HCT116 (cell line): ENCODE measurements at regions of chr10 and their contacts with region 1.

Region 1: GRCh38 chr10:22988581-22989360 is 60.9 kb downstream of the ARMC3 start:
- DNase-seq: peak; percentile 57
- ATAC-seq: peak; percentile 72
- H3K4me3 ChIP-seq: peak overlapping the region in 1 of 2 experiments; percentile 23; a peak in 2 of 4 replicates
- H3K27ac ChIP-seq: no peak overlapping the region
- H3K4me1 ChIP-seq: peaks cover 0 to 16% of the 10 kb centered on the region in 2 experiments; a peak in 1 of 4 replicates
- H3K27me3 ChIP-seq: no peaks in the 10 kb centered on the region
- CTCF ChIP-seq: peak; percentile 78 to 93 (median 82)
- POLR2A ChIP-seq: no peak
- RAD21 ChIP-seq: peak; percentile 96

Region 2: GRCh38 chr10:21989453-21990154 is 999.2 kb before region 1 on chr10:
- CTCF ChIA-PET with region 1: interaction called, 27 read pairs
- POLR2A ChIA-PET with region 1: no interaction called
- RAD21 ChIA-PET with region 1: interaction called, 3 to 4 read pairs
- intact Hi-C with region 1: loop called (anchors 1 kb)
- DNase-seq: peak; percentile 52
- ATAC-seq: peak; percentile 99
- H3K4me3 ChIP-seq: no peak overlapping the region
- H3K27ac ChIP-seq: no peak overlapping the region
- H3K4me1 ChIP-seq: no peaks in the 10 kb centered on the region
- H3K27me3 ChIP-seq: no peaks in the 10 kb centered on the region
- CTCF ChIP-seq: peak; percentile 50 to 71 (median 71); a peak in 5 of 6 replicates
- POLR2A ChIP-seq: no peak
- RAD21 ChIP-seq: peak; percentile 69

Region 3: DNA sequence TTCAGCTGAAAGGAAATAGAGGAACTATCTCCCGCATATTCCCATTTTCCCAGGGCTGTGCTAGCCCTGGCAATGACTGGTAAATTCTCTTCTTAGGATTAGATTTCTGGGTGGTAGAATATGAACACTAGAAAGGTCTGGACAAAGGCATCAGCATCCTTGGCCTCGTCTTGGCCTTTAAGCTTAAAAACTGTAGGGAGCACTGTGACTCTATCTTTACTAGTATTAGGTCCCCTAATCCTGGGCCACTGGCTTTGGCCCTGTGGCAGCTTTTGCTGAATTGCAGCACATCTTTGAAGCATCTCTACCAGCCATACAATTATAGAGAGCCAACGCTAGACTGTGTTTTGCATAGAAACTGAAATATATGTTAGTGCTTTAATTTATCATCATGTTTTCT is 729.5 kb before region 1 on chr10:
- CTCF ChIA-PET with region 1: no interaction called
- POLR2A ChIA-PET with region 1: interaction called, 3 read pairs
- RAD21 ChIA-PET with region 1: interaction called in 1 of 2 experiments, 5 read pairs
- intact Hi-C with region 1: loop called (anchors 5 kb)
- DNase-seq: no peak
- ATAC-seq: peak; percentile 69
- H3K4me3 ChIP-seq: no peak overlapping the region
- H3K27ac ChIP-seq: no peak overlapping the region
- H3K4me1 ChIP-seq: no peaks in the 10 kb centered on the region
- H3K27me3 ChIP-seq: no peaks in the 10 kb centered on the region
- CTCF ChIP-seq: peak in 2 of 3 experiments; percentile 12 to 19; a peak in 2 of 6 replicates
- POLR2A ChIP-seq: no peak
- RAD21 ChIP-seq: peak; percentile 45

Region 4: DNA sequence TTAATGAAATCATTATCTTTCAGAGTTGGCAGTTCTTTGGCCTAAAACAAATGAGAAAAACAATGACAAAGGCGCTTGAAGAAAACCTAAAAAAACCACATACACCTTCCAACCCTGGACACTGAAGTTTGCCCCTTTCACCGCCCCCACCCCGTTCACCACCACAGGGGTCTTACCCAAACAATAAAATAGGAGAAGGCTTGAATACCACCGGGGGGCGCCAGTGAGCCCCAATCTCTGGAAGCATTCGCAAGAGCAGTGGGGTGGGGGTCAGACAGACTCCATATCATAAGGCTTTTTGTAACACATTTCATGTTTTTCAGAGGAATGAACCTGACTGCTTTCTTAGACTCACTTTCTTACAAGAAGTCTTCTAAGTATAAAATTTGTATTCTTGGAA is 438.0 kb before region 1 on chr10:
- CTCF ChIA-PET with region 1: interaction called, 5 read pairs
- POLR2A ChIA-PET with region 1: no interaction called
- RAD21 ChIA-PET with region 1: no interaction called
- intact Hi-C with region 1: loop called (anchors 1 kb)
- DNase-seq: peak; percentile 16
- ATAC-seq: peak; percentile 67
- H3K4me3 ChIP-seq: no peak overlapping the region
- H3K27ac ChIP-seq: no peak overlapping the region
- H3K4me1 ChIP-seq: no peaks in the 10 kb centered on the region
- H3K27me3 ChIP-seq: no peaks in the 10 kb centered on the region
- CTCF ChIP-seq: peak; percentile 34 to 84 (median 64); a peak in 5 of 6 replicates
- POLR2A ChIP-seq: no peak
- RAD21 ChIP-seq: peak; percentile 43

Region 5: GRCh38 chr10:22589851-22590514 is 398.8 kb before region 1 on chr10:
- CTCF ChIA-PET with region 1: no interaction called
- POLR2A ChIA-PET with region 1: no interaction called
- RAD21 ChIA-PET with region 1: no interaction called
- intact Hi-C with region 1: loop called (anchors 5 kb)
- DNase-seq: no peak
- ATAC-seq: no peak
- H3K4me3 ChIP-seq: no peak overlapping the region
- H3K27ac ChIP-seq: no peak overlapping the region
- H3K4me1 ChIP-seq: no peaks in the 10 kb centered on the region
- H3K27me3 ChIP-seq: no peaks in the 10 kb centered on the region
- CTCF ChIP-seq: no peak
- POLR2A ChIP-seq: no peak
- RAD21 ChIP-seq: no peak